ENCODE measurements at regions of chr2 and their contacts with region 1.

Region 1: GRCh38 chr2:219836647-219837177 is 209.3 kb downstream of the SLC4A3 start:
- DNase-seq: peak; percentile 71
- H3K4me3 Mint-ChIP-seq: no peak overlapping the region
- H3K27ac Mint-ChIP-seq: no peak overlapping the region
- H3K4me1 Mint-ChIP-seq: no peaks in the 10 kb centered on the region
- H3K27me3 Mint-ChIP-seq: no peaks in the 10 kb centered on the region
- CTCF ChIP-seq: peak; percentile 54

Region 2: GRCh38 chr2:219664944-219665343 is 171.8 kb before region 1 on chr2:
- CTCF ChIA-PET with region 1: no interaction called
- POLR2A ChIA-PET with region 1: no interaction called
- intact Hi-C with region 1: no loop called
- DNase-seq: no peak
- H3K4me3 Mint-ChIP-seq: no peak overlapping the region
- H3K27ac Mint-ChIP-seq: no peak overlapping the region
- H3K4me1 Mint-ChIP-seq: no peaks in the 10 kb centered on the region
- H3K27me3 Mint-ChIP-seq: no peaks in the 10 kb centered on the region
- CTCF ChIP-seq: no peak

Region 3: DNA sequence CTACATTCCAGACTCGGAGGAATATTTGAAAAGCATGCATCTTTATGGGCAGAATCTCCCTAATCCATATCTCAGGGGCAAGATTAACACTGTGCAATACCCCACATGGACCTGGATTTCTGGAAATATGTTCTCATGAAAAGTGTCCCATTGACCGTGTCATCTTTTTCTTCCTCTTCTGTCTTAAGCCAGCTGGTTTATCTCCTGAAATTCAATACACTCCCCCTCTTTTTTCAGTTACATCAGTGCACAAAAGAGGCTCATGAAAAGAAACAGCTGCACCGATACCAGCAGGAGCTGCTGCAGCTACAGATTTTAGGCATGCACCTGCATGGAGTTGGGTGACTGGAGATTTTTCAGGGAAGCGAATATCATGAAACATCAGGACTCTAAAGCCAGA is 92.1 kb before region 1 on chr2:
- CTCF ChIA-PET with region 1: interaction called, 16 read pairs
- POLR2A ChIA-PET with region 1: no interaction called
- intact Hi-C with region 1: no loop called
- DNase-seq: no peak
- H3K4me3 Mint-ChIP-seq: no peak overlapping the region
- H3K27ac Mint-ChIP-seq: no peak overlapping the region
- H3K4me1 Mint-ChIP-seq: no peaks in the 10 kb centered on the region
- H3K27me3 Mint-ChIP-seq: no peaks in the 10 kb centered on the region
- CTCF ChIP-seq: no peak